ENCODE measurements at regions of chr1 and their contacts with region 1.

Region 1: GRCh38 chr1:89719502-89720306 is 86.8 kb downstream of the LRRC8C start:
- DNase-seq: peak in 1 of 2 donors; percentile 60
- ATAC-seq: peak; percentile 45 to 70 (median 67)
- H3K4me3 ChIP-seq: no peak overlapping the region
- H3K4me3 Mint-ChIP-seq: peak overlapping the region; percentile 83
- H3K27ac ChIP-seq: peak overlapping the region; percentile 84
- H3K27ac Mint-ChIP-seq: peak overlapping the region; percentile 88 to 95
- H3K4me1 ChIP-seq: peaks cover 26% of the 10 kb centered on the region
- H3K4me1 Mint-ChIP-seq: peaks cover 52 to 56% of the 10 kb centered on the region in 2 donors
- H3K27me3 ChIP-seq: no peaks in the 10 kb centered on the region
- H3K27me3 Mint-ChIP-seq: no peaks in the 10 kb centered on the region
- CTCF ChIP-seq: no peak

Region 2: DNA sequence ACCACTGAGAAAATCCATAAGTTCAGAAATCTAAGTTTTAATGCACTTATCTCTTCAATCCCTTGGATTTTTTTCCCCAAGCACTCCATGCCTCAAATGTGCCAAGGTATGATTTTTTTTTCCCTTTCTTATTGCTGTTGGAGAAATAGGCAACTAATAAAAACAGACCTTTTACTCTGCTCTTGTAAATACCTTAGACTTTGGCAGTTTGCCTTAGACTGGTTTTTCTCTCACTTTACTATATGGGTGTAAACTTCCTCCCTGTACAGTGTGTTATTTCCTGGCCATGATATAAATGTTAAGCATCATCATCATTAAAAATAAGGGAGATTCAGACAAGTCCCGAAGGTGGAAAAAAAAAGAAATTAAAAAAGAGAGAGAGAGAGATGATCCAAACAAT is 21.1 kb before region 1 on chr1:
- intact Hi-C with region 1: loop called (anchors 2 kb)
- DNase-seq: peak in 1 of 2 donors; percentile 46
- ATAC-seq: peak; percentile 81 to 89 (median 87)
- H3K4me3 ChIP-seq: no peak overlapping the region
- H3K4me3 Mint-ChIP-seq: peak overlapping the region; percentile 87
- H3K27ac ChIP-seq: peak overlapping the region; percentile 66
- H3K27ac Mint-ChIP-seq: peak overlapping the region; percentile 86 to 94
- H3K4me1 ChIP-seq: peaks cover 19% of the 10 kb centered on the region
- H3K4me1 Mint-ChIP-seq: peaks cover 75 to 78% of the 10 kb centered on the region in 2 donors
- H3K27me3 ChIP-seq: no peaks in the 10 kb centered on the region
- H3K27me3 Mint-ChIP-seq: no peaks in the 10 kb centered on the region
- CTCF ChIP-seq: no peak

Region 3: GRCh38 chr1:89739013-89739843 is 19.5 kb after region 1 on chr1:
- intact Hi-C with region 1: loop called (anchors 1 kb)
- DNase-seq: peak in 1 of 2 donors; percentile 48
- ATAC-seq: peak; percentile 64 to 86 (median 74)
- H3K4me3 ChIP-seq: no peak overlapping the region
- H3K4me3 Mint-ChIP-seq: peak overlapping the region; percentile 43
- H3K27ac ChIP-seq: peak overlapping the region; percentile 40
- H3K27ac Mint-ChIP-seq: peak overlapping the region; percentile 75 to 83
- H3K4me1 ChIP-seq: peaks cover 16% of the 10 kb centered on the region
- H3K4me1 Mint-ChIP-seq: peaks cover 34 to 43% of the 10 kb centered on the region in 2 donors
- H3K27me3 ChIP-seq: no peaks in the 10 kb centered on the region
- H3K27me3 Mint-ChIP-seq: no peaks in the 10 kb centered on the region
- CTCF ChIP-seq: no peak

Region 4: GRCh38 chr1:89794406-89794805 is 74.7 kb after region 1 on chr1:
- intact Hi-C with region 1: no loop called
- DNase-seq: no peak
- ATAC-seq: no peak
- H3K4me3 ChIP-seq: no peak overlapping the region
- H3K4me3 Mint-ChIP-seq: no peak overlapping the region
- H3K27ac ChIP-seq: no peak overlapping the region
- H3K27ac Mint-ChIP-seq: no peak overlapping the region
- H3K4me1 ChIP-seq: no peaks in the 10 kb centered on the region
- H3K4me1 Mint-ChIP-seq: peaks cover 0 to 2% of the 10 kb centered on the region in 2 donors
- H3K27me3 ChIP-seq: no peaks in the 10 kb centered on the region
- H3K27me3 Mint-ChIP-seq: no peaks in the 10 kb centered on the region
- CTCF ChIP-seq: no peak

Measured in natural killer cell (primary cell).